ENCODE measurements at regions of chr1 and their contacts with region 1.

Region 1: GRCh38 chr1:149927503-149928387 is at the start of gene SF3B4:
- DNase-seq: peak; percentile 82 to 98
- H3K4me3 ChIP-seq: peak within 1 kb of the TSS; percentile 72 to 85
- H3K27ac ChIP-seq: peak within 1 kb of the TSS; percentile 83 to 89
- H3K4me1 ChIP-seq: peaks cover 8 to 24% of the 10 kb centered on the region in 2 donors
- H3K27me3 ChIP-seq: no peaks in the 10 kb centered on the region
- CTCF ChIP-seq: no peak
- total RNA-seq, gene SF3B4: 87.3 TPM

Region 2: DNA sequence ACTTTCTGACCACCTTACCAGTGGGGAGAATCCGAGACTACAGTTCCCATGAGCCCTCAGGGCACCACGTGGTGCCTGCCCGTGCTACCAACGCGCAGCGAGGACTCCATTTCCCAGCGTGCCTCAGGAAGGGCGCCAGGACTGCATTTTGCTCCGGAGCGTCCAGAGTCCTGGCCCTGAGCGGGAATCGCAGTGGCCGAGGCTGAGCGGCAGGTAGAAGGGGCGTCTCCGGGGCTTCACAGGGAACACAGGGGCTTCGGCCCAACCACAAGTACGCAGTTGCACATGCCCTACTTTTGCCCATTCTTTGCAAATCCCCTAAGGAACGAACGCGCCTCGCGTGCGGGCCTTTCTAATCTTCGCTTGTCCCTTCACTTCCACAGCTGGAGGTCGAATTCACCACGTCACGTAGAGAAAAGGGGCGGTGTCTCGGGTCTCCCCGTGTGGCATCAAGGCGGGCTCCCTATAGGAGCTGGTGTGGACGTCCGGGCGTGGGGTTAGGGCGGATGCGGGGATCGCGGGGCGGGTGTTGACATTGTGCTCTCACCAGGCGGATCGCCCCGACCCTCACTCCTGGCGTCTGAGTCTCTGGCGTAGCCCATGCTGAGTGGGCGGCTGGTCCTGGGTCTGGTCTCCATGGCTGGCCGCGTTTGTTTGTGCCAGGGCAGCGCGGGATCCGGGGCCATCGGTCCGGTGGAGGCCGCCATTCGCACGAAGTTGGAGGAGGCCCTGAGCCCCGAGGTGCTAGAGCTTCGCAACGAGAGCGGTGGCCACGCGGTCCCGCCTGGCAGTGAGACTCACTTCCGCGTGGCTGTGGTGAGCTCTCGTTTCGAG is 28.1 kb before region 1 on chr1 and contains the start of gene BOLA1:
- intact Hi-C with region 1: loop called (anchors 1 kb)
- DNase-seq: peak; percentile 75 to 96
- H3K4me3 ChIP-seq: peak within 1 kb of the TSS; percentile 66 to 70
- H3K27ac ChIP-seq: peak within 1 kb of the TSS; percentile 87 to 90
- H3K4me1 ChIP-seq: peaks cover 0 to 5% of the 10 kb centered on the region in 2 donors
- H3K27me3 ChIP-seq: no peaks in the 10 kb centered on the region
- CTCF ChIP-seq: no peak
- total RNA-seq, gene BOLA1: 36.7 TPM